ENCODE measurements at regions of chr5 and their contacts with region 1.

Region 1: GRCh38 chr5:135457424-135458071 is 5.4 kb upstream of the TIFAB start:
- DNase-seq: peak; percentile 6 to 53 (median 27)
- H3K4me3 ChIP-seq: no peak overlapping the region
- H3K4me3 Mint-ChIP-seq: no peak overlapping the region
- H3K27ac ChIP-seq: no peak overlapping the region
- H3K27ac Mint-ChIP-seq: peak overlapping the region in 1 of 8 donors; percentile 60
- H3K4me1 ChIP-seq: no peaks in the 10 kb centered on the region
- H3K4me1 Mint-ChIP-seq: peaks cover 0 to 3% (median 0%) of the 10 kb centered on the region in 3 donors
- H3K27me3 ChIP-seq: no peaks in the 10 kb centered on the region
- H3K27me3 Mint-ChIP-seq: peaks cover 10 to 47% of the 10 kb centered on the region in 2 donors

Region 2: DNA sequence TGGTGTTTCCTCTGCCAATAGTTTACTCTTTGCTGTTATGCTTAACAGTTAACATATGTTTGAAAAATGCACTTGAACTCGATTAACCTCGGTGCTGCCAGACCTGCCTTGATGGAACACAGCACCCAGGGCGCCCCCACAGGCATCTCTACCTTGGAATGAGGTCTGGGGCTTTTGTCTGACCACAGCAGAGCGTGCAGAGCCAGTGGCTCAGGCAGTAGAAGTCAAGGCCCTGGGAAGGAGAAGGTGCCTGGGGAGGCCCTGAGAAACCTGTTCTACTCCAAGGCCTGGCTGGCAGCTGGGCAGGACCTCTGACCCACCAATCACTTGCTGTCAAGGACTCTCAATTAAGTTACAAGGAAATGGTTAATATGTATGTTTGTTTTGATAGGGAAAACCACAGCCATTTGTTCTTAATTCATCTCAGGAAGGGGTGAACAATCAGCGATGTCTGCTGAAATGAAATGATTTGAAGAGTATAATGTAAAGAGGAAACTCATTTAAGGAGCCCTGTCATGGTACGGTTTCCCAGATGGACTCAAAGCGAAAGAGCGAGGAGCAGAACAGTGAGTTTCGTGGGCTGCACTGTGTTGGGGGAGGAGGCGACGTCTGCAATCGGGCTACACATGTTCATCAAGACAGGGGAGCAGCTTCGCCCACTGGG is 80.5 kb before region 1 on chr5:
- CTCF ChIA-PET with region 1: no interaction called
- POLR2A ChIA-PET with region 1: no interaction called
- DNase-seq: no peak
- H3K4me3 ChIP-seq: no peak overlapping the region
- H3K4me3 Mint-ChIP-seq: no peak overlapping the region
- H3K27ac ChIP-seq: no peak overlapping the region
- H3K27ac Mint-ChIP-seq: peak overlapping the region in 4 of 8 donors; percentile 42 to 74 (median 57)
- H3K4me1 ChIP-seq: peaks cover 16% of the 10 kb centered on the region
- H3K4me1 Mint-ChIP-seq: peaks cover 40 to 62% (median 61%) of the 10 kb centered on the region in 3 donors
- H3K27me3 ChIP-seq: no peaks in the 10 kb centered on the region
- H3K27me3 Mint-ChIP-seq: no peaks in the 10 kb centered on the region

Region 3: GRCh38 chr5:135398853-135399523 is 58.6 kb before region 1 on chr5 and contains the start of gene MACROH2A1:
- CTCF ChIA-PET with region 1: no interaction called
- POLR2A ChIA-PET with region 1: no interaction called
- DNase-seq: peak; percentile 70 to 81 (median 75)
- H3K4me3 ChIP-seq: peak within 1 kb of the TSS; percentile 66
- H3K4me3 Mint-ChIP-seq: peak within 1 kb of the TSS; percentile 85 to 95 (median 88)
- H3K27ac ChIP-seq: peak within 1 kb of the TSS; percentile 81
- H3K27ac Mint-ChIP-seq: peak within 1 kb of the TSS; percentile 56 to 94 (median 90)
- H3K4me1 ChIP-seq: peaks cover 43% of the 10 kb centered on the region
- H3K4me1 Mint-ChIP-seq: peaks cover 43 to 52% (median 47%) of the 10 kb centered on the region in 3 donors
- H3K27me3 ChIP-seq: no peaks in the 10 kb centered on the region
- H3K27me3 Mint-ChIP-seq: peaks cover 2% of the 10 kb centered on the region in 2 donors
- total RNA-seq, gene MACROH2A1: 199 to 202 TPM

Region 4: DNA sequence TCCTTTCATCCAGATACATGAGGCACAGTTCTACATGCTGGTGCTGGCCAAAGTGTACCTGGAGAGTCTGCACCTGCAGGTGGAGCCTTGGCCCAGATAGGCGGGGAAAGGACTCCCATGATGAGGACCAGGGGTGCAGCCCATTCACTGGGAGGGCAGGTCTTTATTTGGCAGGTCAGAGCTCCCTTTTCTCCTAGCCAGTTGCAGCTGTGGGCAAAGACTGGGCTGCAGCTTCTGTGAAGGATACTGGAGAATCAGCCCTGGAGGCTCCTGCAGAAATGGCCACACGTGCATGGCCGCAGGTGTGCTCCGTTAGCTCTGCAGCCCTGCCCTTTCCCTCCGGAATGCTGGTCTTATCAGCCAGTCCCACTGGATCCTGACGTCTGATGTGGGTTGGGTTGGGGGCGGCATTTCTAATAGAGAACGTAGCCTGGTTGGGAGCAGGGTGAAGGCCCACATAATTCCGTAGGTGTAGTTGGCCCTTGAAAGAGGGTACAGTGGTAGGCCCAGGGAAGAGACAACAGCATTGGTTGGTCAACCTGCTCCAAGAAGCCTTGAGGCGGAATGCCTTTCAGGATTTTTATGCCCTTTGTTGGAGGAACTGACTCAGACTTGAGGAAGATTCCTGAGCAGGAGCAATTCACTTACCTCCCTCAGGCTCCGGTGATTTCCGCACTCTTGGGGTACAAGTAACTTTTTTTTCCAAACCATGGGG is 16.5 kb after region 1 on chr5:
- CTCF ChIA-PET with region 1: interaction called, 11 read pairs
- POLR2A ChIA-PET with region 1: no interaction called
- DNase-seq: no peak
- H3K4me3 ChIP-seq: no peak overlapping the region
- H3K4me3 Mint-ChIP-seq: no peak overlapping the region
- H3K27ac ChIP-seq: no peak overlapping the region
- H3K27ac Mint-ChIP-seq: no peak overlapping the region
- H3K4me1 ChIP-seq: no peaks in the 10 kb centered on the region
- H3K4me1 Mint-ChIP-seq: no peaks in the 10 kb centered on the region
- H3K27me3 ChIP-seq: peaks cover 2% of the 10 kb centered on the region
- H3K27me3 Mint-ChIP-seq: peaks cover 15 to 27% of the 10 kb centered on the region in 2 donors